ENCODE measurements at regions of chr7 and their contacts with region 1.

Region 1: GRCh38 chr7:138483531-138483930 is 23.5 kb downstream of the TRIM24 start:
- DNase-seq: no peak
- H3K4me3 Mint-ChIP-seq: no peak overlapping the region
- H3K27ac Mint-ChIP-seq: no peak overlapping the region
- H3K4me1 Mint-ChIP-seq: peaks cover 25% of the 10 kb centered on the region
- H3K27me3 Mint-ChIP-seq: no peaks in the 10 kb centered on the region

Region 2: GRCh38 chr7:138370956-138371355 is 112.6 kb before region 1 on chr7:
- intact Hi-C with region 1: no loop called
- DNase-seq: no peak
- H3K4me3 Mint-ChIP-seq: no peak overlapping the region
- H3K27ac Mint-ChIP-seq: no peak overlapping the region
- H3K4me1 Mint-ChIP-seq: no peaks in the 10 kb centered on the region
- H3K27me3 Mint-ChIP-seq: no peaks in the 10 kb centered on the region

Region 3: GRCh38 chr7:138538518-138538917 is 55.0 kb after region 1 on chr7:
- intact Hi-C with region 1: no loop called
- DNase-seq: no peak
- H3K4me3 Mint-ChIP-seq: no peak overlapping the region
- H3K27ac Mint-ChIP-seq: no peak overlapping the region
- H3K4me1 Mint-ChIP-seq: peaks cover 10% of the 10 kb centered on the region
- H3K27me3 Mint-ChIP-seq: no peaks in the 10 kb centered on the region

Region 4: DNA sequence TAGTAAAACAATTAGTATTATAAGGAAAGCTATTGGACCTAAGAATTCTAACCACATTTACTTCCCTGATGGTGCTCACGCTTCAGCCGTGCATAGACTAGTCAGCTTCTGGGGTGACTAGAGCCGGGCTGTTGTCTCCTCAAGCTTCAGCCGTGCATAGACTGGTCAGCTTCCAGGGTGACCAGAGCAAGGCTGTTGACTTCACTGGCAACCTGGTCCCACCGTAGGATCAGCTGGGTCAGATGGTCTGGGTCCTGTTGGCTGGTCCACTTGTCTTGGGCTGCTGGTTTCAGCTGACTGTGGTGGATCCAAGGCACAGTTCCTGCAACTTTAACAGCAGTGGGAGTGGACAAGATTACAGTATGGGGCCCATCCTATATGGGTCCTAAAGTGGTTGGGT is 75.9 kb after region 1 on chr7:
- intact Hi-C with region 1: loop called (anchors 2 kb)
- DNase-seq: no peak
- H3K4me3 Mint-ChIP-seq: no peak overlapping the region
- H3K27ac Mint-ChIP-seq: no peak overlapping the region
- H3K4me1 Mint-ChIP-seq: no peaks in the 10 kb centered on the region
- H3K27me3 Mint-ChIP-seq: no peaks in the 10 kb centered on the region

Measured in activated T-helper 2 cell treated with anti-CD3 and anti-CD28 coated beads, Interferon-gamma antibody, Interleukin-2, Interleukin-4, amounts not matched to agents 10 μg/mL and 5 μg/mL and 100 μg/mL, durations not matched to agents 14 hours and 24 hours and 36 hours (primary cell).